ENCODE measurements at regions of chr12 and their contacts with region 1.

Region 1: DNA sequence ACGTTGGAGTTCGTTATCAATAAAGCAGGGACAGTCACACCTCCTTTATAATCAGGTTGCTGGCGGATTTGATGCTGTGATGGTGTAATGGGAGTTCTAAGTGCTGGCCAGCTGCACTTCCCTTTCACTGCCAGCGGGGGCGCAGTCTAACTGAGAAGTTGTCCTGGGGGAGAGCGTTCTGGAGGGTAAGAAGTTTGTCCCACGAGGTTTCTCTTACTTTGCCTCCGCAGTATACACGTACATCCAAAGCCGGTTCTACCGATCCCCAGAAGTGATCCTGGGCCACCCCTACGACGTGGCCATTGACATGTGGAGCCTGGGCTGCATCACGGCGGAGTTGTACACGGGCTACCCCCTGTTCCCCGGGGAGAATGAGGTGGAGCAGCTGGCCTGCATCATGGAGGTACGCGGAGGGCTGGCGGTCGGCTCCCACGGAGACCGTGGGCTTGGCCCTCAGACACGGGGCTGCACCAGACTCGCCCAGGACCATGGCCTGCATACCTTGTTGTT is 42.7 kb downstream of the DYRK4 start:
- DNase-seq: peak; percentile 44
- H3K4me3 ChIP-seq: peak overlapping the region; percentile 82
- H3K27me3 ChIP-seq: no peaks in the 10 kb centered on the region; the same call in 1 of the 2 replicates
- CTCF ChIP-seq: peak; percentile 99

Region 2: DNA sequence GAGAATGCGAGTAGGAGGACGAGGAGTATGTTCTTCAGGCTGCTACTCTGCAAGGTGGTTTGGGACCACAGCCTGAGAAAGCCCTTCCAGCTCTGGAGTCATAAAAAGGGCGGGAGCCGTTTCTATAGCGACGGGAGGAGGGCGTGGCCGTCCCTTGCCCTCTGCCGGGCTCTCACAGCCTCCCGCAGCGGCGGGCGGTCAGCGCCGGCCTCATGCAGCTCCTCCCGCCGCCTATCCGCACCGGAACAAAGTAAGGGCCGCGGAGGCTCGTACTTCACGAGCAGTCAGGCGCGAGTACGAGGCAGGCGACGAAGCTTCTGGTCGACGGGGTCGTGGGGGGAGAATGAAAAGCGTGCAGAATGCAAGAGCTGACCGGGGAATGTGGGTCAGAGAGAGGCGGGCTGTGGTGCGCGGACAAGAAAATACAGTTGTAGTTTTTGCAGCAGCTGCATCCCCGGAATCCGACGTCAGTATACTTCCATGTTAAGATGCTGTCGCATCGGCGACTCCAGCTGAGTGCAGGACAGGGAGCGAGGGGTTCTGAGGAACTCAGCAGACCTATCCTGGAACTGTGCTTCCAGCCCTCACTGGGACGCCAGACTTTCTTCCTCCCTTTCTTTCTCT is 42.6 kb before region 1 on chr12 and contains the start of gene DYRK4:
- CTCF ChIA-PET with region 1: interaction called, 10 read pairs
- POLR2A ChIA-PET with region 1: no interaction called
- DNase-seq: no peak
- H3K4me3 ChIP-seq: peak within 1 kb of the TSS; percentile 44
- H3K27me3 ChIP-seq: no peaks in the 10 kb centered on the region
- CTCF ChIP-seq: 0 out of 2 replicates have a peak, but pooled peaks have one; percentile 6
- polyA plus RNA-seq, gene DYRK4: 77.5 and 114 TPM in 2 replicates

Region 3: DNA sequence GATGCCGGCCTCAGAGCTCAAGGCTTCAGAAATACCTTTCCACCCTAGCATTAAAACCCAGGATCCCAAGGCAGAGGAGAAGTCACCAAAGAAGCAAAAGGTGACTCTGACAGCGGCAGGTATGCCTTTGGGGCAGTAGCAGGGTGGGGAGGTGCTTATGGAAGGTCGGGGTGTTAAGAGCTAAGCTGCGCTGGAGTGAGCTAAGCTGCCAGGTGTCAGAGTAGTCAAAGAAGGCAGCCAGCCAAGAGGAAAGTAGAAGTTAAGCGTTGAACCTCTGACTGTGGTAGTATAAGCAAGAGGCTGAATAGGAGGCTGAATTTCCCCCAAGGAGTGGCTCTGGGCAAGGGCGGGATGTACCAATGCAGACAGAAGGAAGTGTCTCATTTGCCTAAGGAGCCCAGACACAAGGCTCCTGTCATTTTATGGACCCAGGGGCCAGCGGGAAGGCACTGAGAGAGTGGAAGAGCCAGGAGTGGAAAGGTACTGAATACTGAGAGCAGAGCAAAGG is 13.5 kb before region 1 on chr12:
- CTCF ChIA-PET with region 1: interaction called, 26 read pairs
- POLR2A ChIA-PET with region 1: no interaction called
- DNase-seq: no peak
- H3K4me3 ChIP-seq: no peak overlapping the region
- H3K27me3 ChIP-seq: peaks cover 8% of the 10 kb centered on the region
- CTCF ChIP-seq: no peak

Region 4: GRCh38 chr12:4763549-4763948 is 158.8 kb after region 1 on chr12:
- CTCF ChIA-PET with region 1: interaction called, 21 read pairs
- POLR2A ChIA-PET with region 1: no interaction called
- DNase-seq: no peak
- H3K4me3 ChIP-seq: no peak overlapping the region
- H3K27me3 ChIP-seq: no peaks in the 10 kb centered on the region
- CTCF ChIP-seq: 0 out of 2 replicates have a peak, but pooled peaks have one; percentile 5